ENCODE measurements at regions of chrX and their contacts with region 1.

Region 1: DNA sequence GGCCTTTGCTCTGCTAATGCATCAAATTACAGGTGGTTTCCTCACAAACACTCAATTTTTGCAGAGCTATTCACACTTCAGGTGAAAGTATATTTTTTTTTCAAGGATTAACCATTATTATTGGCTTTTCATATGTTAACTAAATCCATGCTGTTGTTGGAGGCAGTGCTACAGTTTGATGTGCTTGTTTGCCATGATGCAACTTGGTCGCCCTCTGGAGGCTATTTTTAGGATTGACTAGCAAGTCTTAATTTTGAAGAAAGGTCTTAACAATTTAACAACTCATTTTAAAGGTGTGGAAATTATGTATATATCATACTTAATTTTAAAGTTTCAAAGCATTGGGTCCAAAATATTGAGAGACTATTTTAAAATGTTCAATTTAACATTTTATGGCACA is 168.8 kb upstream of the FAM47A start:
- DNase-seq: peak; percentile 62
- H3K4me3 Mint-ChIP-seq: no peak overlapping the region
- H3K27ac Mint-ChIP-seq: no peak overlapping the region
- H3K4me1 Mint-ChIP-seq: no peaks in the 10 kb centered on the region
- H3K27me3 Mint-ChIP-seq: peaks cover 26% of the 10 kb centered on the region
- CTCF ChIP-seq: peak; percentile 62

Region 2: DNA sequence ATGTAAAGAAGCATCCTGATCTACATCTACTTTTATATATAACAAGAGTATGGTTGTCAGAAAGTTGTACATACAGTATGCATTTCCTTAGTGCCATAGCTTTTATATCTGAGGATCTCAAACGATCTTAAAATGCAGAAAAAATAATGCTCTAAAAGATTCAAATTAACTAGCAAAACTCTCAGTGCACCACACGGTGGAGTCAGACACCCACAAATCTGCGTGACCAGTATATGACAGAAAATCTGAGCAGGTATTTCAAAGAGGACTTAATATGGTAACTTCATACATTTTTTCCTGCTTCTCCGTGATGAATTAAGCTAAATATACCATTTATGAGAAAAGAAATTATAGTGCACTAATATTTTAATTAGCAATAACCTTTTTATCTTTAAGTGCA is 1892.5 kb before region 1 on chrX:
- CTCF ChIA-PET with region 1: interaction called, 4 read pairs
- POLR2A ChIA-PET with region 1: no interaction called
- intact Hi-C with region 1: loop called (anchors 10 kb)
- DNase-seq: peak; percentile 35
- H3K4me3 Mint-ChIP-seq: no peak overlapping the region
- H3K27ac Mint-ChIP-seq: no peak overlapping the region
- H3K4me1 Mint-ChIP-seq: no peaks in the 10 kb centered on the region
- H3K27me3 Mint-ChIP-seq: peaks cover 23% of the 10 kb centered on the region
- CTCF ChIP-seq: peak; percentile 45

Region 3: GRCh38 chrX:32530802-32531403 is 1770.0 kb before region 1 on chrX:
- CTCF ChIA-PET with region 1: interaction called, 3 read pairs
- POLR2A ChIA-PET with region 1: no interaction called
- intact Hi-C with region 1: loop called (anchors 2 kb)
- DNase-seq: peak; percentile 66
- H3K4me3 Mint-ChIP-seq: peak overlapping the region; percentile 25
- H3K27ac Mint-ChIP-seq: no peak overlapping the region
- H3K4me1 Mint-ChIP-seq: no peaks in the 10 kb centered on the region
- H3K27me3 Mint-ChIP-seq: peaks cover 14% of the 10 kb centered on the region
- CTCF ChIP-seq: peak; percentile 52

Region 4: GRCh38 chrX:34218063-34218462 is 82.8 kb before region 1 on chrX:
- CTCF ChIA-PET with region 1: no interaction called
- POLR2A ChIA-PET with region 1: no interaction called
- intact Hi-C with region 1: no loop called
- DNase-seq: peak; percentile 67
- H3K4me3 Mint-ChIP-seq: no peak overlapping the region
- H3K27ac Mint-ChIP-seq: peak overlapping the region; percentile 59
- H3K4me1 Mint-ChIP-seq: no peaks in the 10 kb centered on the region
- H3K27me3 Mint-ChIP-seq: no peaks in the 10 kb centered on the region
- CTCF ChIP-seq: no peak